Heart left ventricle (tissue), 16 donors: ENCODE measurements at regions of chr18 and their contacts with region 1.

Region 1: GRCh38 chr18:36481201-36481657 is 183.7 kb downstream of the FHOD3 start:
- DNase-seq: no peak
- ATAC-seq: no peak
- H3K4me3 ChIP-seq: no peak overlapping the region
- H3K27ac ChIP-seq: no peak overlapping the region
- H3K4me1 ChIP-seq: peaks cover 0 to 56% (median 11%) of the 10 kb centered on the region in 12 donors
- H3K27me3 ChIP-seq: no peaks in the 10 kb centered on the region
- CTCF ChIP-seq: no peak
- POLR2A ChIP-seq: no peak

Region 2: GRCh38 chr18:35904389-35905037 is 576.7 kb before region 1 on chr18:
- intact Hi-C with region 1: no loop called
- DNase-seq: no peak
- ATAC-seq: peak in 1 of 4 donors; percentile 27
- H3K4me3 ChIP-seq: no peak overlapping the region
- H3K27ac ChIP-seq: no peak overlapping the region
- H3K4me1 ChIP-seq: no peaks in the 10 kb centered on the region
- H3K27me3 ChIP-seq: no peaks in the 10 kb centered on the region
- CTCF ChIP-seq: no peak
- POLR2A ChIP-seq: no peak

Region 3: GRCh38 chr18:36543991-36544725 is 62.9 kb after region 1 on chr18:
- intact Hi-C with region 1: loop called in 2 of 10 experiments (anchors 10 kb)
- DNase-seq: peak in 3 of 5 donors; percentile 40 to 71 (median 60)
- ATAC-seq: peak; percentile 48 to 77 (median 64)
- H3K4me3 ChIP-seq: no peak overlapping the region
- H3K27ac ChIP-seq: peak overlapping the region in 8 of 12 donors; percentile 2 to 56 (median 36)
- H3K4me1 ChIP-seq: peaks cover 0 to 39% (median 11%) of the 10 kb centered on the region in 12 donors
- H3K27me3 ChIP-seq: no peaks in the 10 kb centered on the region
- CTCF ChIP-seq: no peak
- POLR2A ChIP-seq: no peak